ENCODE measurements at regions of chr14 and their contacts with region 1.

Region 1: GRCh38 chr14:68548194-68549056 is 244.4 kb downstream of the ZFP36L1 start:
- DNase-seq: peak; percentile 98
- H3K4me3 ChIP-seq: no peak overlapping the region
- H3K27ac ChIP-seq: peak overlapping the region; percentile 98
- H3K4me1 ChIP-seq: peaks cover 86% of the 10 kb centered on the region
- H3K27me3 ChIP-seq: no peaks in the 10 kb centered on the region
- CTCF ChIP-seq: no peak

Region 2: GRCh38 chr14:68137704-68138619 is 410.5 kb before region 1 on chr14:
- CTCF ChIA-PET with region 1: no interaction called
- dilution Hi-C with region 1: no loop called
- in situ Hi-C with region 1: no loop called
- intact Hi-C with region 1: loop called (anchors 5 kb)
- DNase-seq: peak; percentile 99
- H3K4me3 ChIP-seq: no peak overlapping the region
- H3K27ac ChIP-seq: peak overlapping the region; percentile 99
- H3K4me1 ChIP-seq: peaks cover 63% of the 10 kb centered on the region
- H3K27me3 ChIP-seq: no peaks in the 10 kb centered on the region
- CTCF ChIP-seq: no peak

Region 3: DNA sequence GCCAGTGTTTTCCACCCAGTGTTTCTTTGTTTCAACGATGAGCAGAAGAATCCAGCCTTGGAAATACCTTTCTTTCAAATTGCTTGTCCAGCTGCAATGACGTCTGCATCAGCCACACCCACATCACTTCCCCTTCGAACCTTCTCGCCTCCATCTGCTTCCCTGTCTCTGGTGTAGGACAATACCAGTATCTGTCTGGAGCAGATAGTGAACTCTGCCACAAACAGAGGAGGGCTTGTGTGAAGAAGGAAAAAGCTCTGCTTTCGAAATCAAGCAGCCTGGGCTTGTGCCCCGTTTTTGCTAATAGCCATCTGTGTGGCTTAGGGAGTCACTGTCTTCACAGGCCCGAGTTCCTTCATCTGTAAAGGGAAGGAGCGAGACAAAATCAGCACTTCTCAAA is 171.0 kb before region 1 on chr14:
- CTCF ChIA-PET with region 1: no interaction called
- dilution Hi-C with region 1: no loop called
- in situ Hi-C with region 1: no loop called
- intact Hi-C with region 1: loop called (anchors 2 kb)
- DNase-seq: peak; percentile 73
- H3K4me3 ChIP-seq: no peak overlapping the region
- H3K27ac ChIP-seq: peak overlapping the region; percentile 70
- H3K4me1 ChIP-seq: peaks cover 21% of the 10 kb centered on the region
- H3K27me3 ChIP-seq: no peaks in the 10 kb centered on the region
- CTCF ChIP-seq: no peak

Region 4: DNA sequence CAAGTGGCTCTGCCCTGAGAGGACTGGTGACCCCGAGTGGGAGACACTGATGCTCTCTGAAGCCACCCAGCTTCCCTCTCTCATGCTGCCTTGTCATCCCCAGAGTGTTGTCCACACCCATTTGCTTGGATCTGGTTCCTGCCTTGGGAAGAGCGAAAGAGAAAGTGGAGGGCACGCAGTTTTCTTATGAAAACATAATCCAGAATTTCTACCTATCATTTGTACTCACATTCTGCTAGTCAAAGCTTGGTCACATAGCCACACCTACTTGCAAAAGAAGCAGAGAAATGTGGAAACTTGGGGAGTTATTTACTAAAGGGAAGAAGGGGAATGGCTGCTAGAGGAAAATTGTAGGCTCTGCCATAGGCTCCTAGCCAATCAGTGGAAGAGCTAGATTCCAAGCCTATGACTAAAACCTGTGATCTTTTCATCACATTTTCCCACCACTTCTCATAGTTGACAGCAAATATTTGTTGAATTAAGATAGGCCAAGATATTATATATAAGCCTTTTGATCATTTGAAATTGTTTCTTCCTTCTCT is 81.9 kb before region 1 on chr14:
- CTCF ChIA-PET with region 1: interaction called, 5 read pairs
- dilution Hi-C with region 1: no loop called
- in situ Hi-C with region 1: no loop called
- intact Hi-C with region 1: loop called (anchors 1 kb)
- DNase-seq: peak; percentile 91
- H3K4me3 ChIP-seq: no peak overlapping the region
- H3K27ac ChIP-seq: peak overlapping the region; percentile 84
- H3K4me1 ChIP-seq: peaks cover 78% of the 10 kb centered on the region
- H3K27me3 ChIP-seq: no peaks in the 10 kb centered on the region
- CTCF ChIP-seq: no peak

Region 5: DNA sequence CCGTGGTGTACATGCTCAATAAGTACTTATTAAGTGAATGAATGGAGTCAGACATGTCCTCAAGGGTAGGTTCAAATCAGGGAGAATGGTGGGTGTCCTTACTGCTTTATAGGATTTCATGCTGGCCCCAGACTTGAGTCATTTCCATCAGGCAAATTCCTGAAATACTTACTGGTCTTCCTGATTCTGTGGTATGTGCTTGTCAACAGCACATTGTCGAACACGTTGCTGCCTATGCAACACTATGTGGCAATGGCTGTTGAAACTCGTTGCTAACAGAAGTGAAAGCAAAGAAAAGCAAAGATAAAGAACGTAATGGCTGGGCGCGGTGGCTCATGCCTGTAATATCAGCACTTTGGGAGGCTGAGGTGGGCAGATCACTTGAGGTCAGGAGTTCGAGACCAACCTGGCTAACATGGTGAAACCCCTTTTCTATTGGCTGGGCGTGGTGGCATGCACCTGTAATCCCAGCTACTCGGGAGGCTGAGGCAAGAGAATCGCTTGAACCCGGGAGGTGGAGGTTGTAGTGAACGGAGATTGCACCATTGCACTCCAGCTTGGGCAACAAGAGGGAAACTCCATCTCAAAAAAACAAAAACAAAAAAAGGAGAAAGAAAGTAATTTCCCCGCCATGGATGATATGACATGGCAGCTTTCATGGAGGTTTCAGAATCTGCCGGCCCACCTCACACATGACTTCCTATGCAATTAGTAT is 29.6 kb after region 1 on chr14:
- CTCF ChIA-PET with region 1: no interaction called
- dilution Hi-C with region 1: no loop called
- in situ Hi-C with region 1: no loop called
- intact Hi-C with region 1: loop called (anchors 1 kb)
- DNase-seq: peak; percentile 96
- H3K4me3 ChIP-seq: no peak overlapping the region
- H3K27ac ChIP-seq: peak overlapping the region; percentile 82
- H3K4me1 ChIP-seq: peaks cover 40% of the 10 kb centered on the region
- H3K27me3 ChIP-seq: no peaks in the 10 kb centered on the region
- CTCF ChIP-seq: no peak

Region 6: DNA sequence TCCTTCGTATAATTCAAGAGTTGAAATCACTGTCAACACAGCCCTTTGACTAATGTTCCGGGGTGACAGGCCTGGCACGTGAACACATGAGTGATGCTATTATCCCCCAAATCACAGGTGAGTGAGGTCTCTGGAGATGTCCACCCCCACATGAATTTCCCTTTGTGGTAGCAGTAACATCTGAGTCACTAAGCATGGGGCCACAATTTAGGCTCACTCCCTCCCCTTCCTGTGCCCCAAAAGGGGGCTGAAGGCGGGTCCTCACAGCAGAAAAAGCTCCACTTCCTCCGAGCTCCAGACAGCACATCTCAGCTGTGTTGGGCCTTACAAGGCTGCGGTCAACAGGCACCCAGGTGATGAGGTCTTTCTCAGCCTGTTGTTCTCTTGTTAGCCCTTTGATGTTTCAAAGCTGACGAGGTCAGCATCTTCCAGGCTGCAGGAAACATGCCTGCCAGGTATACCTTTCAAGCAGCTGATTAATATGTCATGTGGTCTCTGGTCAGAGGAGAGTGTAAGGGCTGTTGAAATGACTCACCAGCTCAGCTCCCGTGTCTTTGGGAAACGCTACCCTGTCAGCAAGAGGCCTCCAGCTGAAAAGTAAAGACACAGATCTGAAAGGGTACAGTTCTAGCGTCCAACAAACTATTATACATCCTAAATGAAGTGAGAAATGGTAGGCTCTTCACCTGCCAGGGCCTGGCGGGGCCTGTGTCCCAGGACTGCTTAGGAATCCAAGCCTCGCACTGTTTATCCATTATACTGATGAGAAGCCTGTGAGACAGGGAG is 137.2 kb after region 1 on chr14:
- CTCF ChIA-PET with region 1: no interaction called
- dilution Hi-C with region 1: no loop called
- in situ Hi-C with region 1: no loop called
- intact Hi-C with region 1: loop called (anchors 1 kb)
- DNase-seq: peak; percentile 99
- H3K4me3 ChIP-seq: no peak overlapping the region
- H3K27ac ChIP-seq: peak overlapping the region; percentile 96
- H3K4me1 ChIP-seq: peaks cover 77% of the 10 kb centered on the region
- H3K27me3 ChIP-seq: no peaks in the 10 kb centered on the region
- CTCF ChIP-seq: no peak

Region 7: GRCh38 chr14:68795597-68796417 is 247.4 kb after region 1 on chr14:
- CTCF ChIA-PET with region 1: no interaction called
- dilution Hi-C with region 1: no loop called
- in situ Hi-C with region 1: loop called in 1 of 2 experiments (anchors 25 kb)
- intact Hi-C with region 1: no loop called
- DNase-seq: peak; percentile 85
- H3K4me3 ChIP-seq: peak overlapping the region; percentile 63 to 72 (median 72)
- H3K27ac ChIP-seq: peak overlapping the region; percentile 98
- H3K4me1 ChIP-seq: peaks cover 15% of the 10 kb centered on the region
- H3K27me3 ChIP-seq: no peaks in the 10 kb centered on the region
- CTCF ChIP-seq: peak; percentile 52 to 78

Measured in mammary epithelial cell (primary cell).